ENCODE measurements at regions of chr15 and their contacts with region 1.

Region 1: DNA sequence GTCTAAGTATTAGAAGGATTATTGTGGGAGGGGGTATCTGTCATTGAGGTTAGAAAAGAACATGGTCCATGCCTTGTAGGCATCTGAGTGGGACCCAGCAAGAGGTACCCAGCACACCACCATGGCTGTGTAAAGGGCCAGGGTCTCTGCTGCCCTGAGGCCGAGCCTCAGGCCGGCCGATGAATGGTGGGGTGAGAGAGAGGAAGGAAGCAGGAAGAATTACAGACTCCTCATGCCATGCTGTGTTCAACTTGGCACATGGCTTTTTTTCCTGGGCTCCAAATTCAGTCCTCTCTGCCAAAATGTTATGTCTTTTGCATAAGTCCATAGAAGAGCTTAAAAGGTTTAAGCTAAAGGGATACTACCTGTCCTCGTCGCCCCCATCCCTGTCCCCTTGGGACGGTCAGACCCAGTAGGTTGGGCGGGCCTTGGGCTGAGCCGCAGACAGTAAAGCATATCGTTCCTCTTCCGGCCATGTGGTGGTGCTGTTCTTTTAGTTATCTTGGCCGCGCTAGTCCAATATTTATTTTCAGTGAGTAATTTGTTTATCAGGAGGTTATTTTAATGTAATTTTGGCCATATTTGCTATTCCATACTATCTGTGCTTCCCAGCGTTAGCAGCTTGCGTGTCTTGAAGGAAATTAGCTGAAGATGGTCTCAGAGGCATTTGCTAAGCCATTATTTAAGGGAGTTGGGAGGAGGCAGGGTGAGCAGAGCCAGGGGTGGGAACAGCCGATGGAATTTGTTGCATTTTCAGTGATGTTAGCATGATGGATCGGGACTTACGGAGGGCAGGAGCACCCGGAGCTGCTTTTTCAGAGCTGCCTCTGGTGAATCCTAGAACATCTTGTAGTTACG is 152.4 kb downstream of the AGBL1 start:
- DNase-seq: peak in 24 of 35 experiments; percentile 0 to 64 (median 18)
- ATAC-seq: peak in 1 of 4 experiments; percentile 34
- H3K4me3 ChIP-seq: no peak overlapping the region
- H3K4me3 Mint-ChIP-seq: no peak overlapping the region
- H3K27ac ChIP-seq: no peak overlapping the region
- H3K27ac Mint-ChIP-seq: no peak overlapping the region
- H3K4me1 ChIP-seq: peaks cover 0 to 2% of the 10 kb centered on the region in 2 experiments
- H3K4me1 Mint-ChIP-seq: peaks cover 2 to 6% (median 4%) of the 10 kb centered on the region in 3 donors
- H3K27me3 ChIP-seq: peaks cover 9 to 21% of the 10 kb centered on the region in 2 experiments
- H3K27me3 Mint-ChIP-seq: peaks cover 28 to 31% of the 10 kb centered on the region in 2 donors

Region 2: GRCh38 chr15:85576392-85576791 is 655.7 kb before region 1 on chr15:
- CTCF ChIA-PET with region 1: interaction called in 1 of 2 experiments, 19 read pairs
- POLR2A ChIA-PET with region 1: no interaction called
- DNase-seq: no peak
- ATAC-seq: no peak
- H3K4me3 ChIP-seq: no peak overlapping the region
- H3K4me3 Mint-ChIP-seq: no peak overlapping the region
- H3K27ac ChIP-seq: no peak overlapping the region
- H3K27ac Mint-ChIP-seq: no peak overlapping the region
- H3K4me1 ChIP-seq: peaks cover 14 to 16% of the 10 kb centered on the region in 2 experiments
- H3K4me1 Mint-ChIP-seq: peaks cover 35 to 40% (median 38%) of the 10 kb centered on the region in 3 donors
- H3K27me3 ChIP-seq: no peaks in the 10 kb centered on the region
- H3K27me3 Mint-ChIP-seq: no peaks in the 10 kb centered on the region

Region 3: GRCh38 chr15:86316726-86317383 is 84.8 kb after region 1 on chr15:
- CTCF ChIA-PET with region 1: no interaction called
- POLR2A ChIA-PET with region 1: no interaction called
- DNase-seq: no peak
- ATAC-seq: no peak
- H3K4me3 ChIP-seq: no peak overlapping the region
- H3K4me3 Mint-ChIP-seq: no peak overlapping the region
- H3K27ac ChIP-seq: no peak overlapping the region
- H3K27ac Mint-ChIP-seq: no peak overlapping the region
- H3K4me1 ChIP-seq: no peaks in the 10 kb centered on the region
- H3K4me1 Mint-ChIP-seq: peaks cover 0 to 15% (median 8%) of the 10 kb centered on the region in 3 donors
- H3K27me3 ChIP-seq: peaks cover 0 to 2% of the 10 kb centered on the region in 2 experiments
- H3K27me3 Mint-ChIP-seq: peaks cover 9 to 16% of the 10 kb centered on the region in 2 donors

Region 4: DNA sequence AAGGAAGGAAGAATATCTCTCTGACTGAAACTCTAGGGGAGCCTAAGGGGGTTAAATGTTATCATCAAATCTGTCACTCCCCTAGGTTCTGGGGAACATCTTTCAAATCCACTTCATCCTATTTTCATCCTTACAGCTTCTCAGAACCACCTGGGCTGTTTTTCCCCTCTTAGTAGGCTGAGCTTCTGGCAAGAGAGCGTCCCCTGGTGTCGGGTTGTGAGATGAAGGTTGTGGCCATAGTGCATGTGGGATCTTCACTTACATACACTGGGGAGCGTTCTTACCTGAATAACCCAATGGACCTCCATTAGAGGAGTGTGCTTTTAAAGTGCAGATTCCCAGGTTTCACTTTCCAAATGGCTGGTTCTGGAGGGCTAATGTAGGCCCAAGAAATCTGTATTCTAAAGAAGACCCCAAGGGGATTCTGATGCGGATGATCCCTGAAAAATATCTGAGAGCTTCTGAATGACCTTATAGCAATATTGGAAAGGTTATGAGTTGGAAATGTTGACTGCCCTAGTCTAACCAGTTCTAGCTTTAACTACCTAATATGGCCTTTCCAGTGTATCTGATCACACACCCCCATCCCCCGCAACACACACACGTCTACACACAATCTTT is 511.3 kb after region 1 on chr15:
- CTCF ChIA-PET with region 1: interaction called, 3 to 25 read pairs
- POLR2A ChIA-PET with region 1: no interaction called
- DNase-seq: peak in 33 of 35 experiments; percentile 10 to 70 (median 40)
- ATAC-seq: peak in 1 of 4 experiments; percentile 51
- H3K4me3 ChIP-seq: no peak overlapping the region
- H3K4me3 Mint-ChIP-seq: no peak overlapping the region
- H3K27ac ChIP-seq: no peak overlapping the region
- H3K27ac Mint-ChIP-seq: no peak overlapping the region
- H3K4me1 ChIP-seq: no peaks in the 10 kb centered on the region
- H3K4me1 Mint-ChIP-seq: peaks cover 0 to 3% (median 0%) of the 10 kb centered on the region in 3 donors
- H3K27me3 ChIP-seq: no peaks in the 10 kb centered on the region
- H3K27me3 Mint-ChIP-seq: no peaks in the 10 kb centered on the region

Measured in T-cell (primary cell).